GM12878 (cell line): ENCODE measurements at regions of chr6 and their contacts with region 1.

Region 1: DNA sequence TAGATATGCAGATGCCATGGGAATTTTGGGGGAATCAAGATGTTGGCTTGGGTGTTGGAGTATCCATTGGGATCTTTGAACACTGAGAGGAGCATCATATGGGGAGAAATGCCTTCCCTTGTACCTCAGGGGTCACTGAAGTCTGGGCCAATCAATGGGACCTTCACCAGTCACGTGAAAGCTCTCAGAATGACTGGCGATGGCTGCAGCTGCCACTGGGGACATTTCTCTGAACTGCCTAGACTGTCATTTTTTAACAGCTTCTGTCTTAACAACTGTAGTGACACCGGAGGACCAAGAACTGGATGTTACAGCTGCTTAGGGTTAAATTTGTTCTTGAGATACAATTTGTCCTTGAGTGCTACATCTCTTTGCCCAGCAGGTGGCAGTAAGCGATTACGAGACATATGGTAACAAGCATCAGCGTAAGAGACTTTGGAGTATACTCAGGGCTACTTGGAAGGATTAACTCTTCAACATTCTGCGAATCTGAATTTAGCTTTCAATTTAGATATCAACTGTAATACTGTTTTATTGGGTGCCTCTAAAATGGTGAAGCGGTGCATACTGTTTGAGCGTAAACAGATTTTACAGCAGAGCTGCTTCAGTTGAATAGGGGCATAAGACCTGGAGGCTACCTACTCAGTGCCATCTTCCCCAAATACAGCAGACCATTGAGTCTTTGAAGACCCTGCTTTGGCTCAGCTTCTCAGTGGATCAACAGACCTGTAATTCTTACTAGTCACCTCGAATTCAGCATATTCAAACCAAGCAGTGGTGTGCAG is 36.0 kb downstream of the CCN2 start:
- DNase-seq: peak; percentile 24
- ATAC-seq: peak; percentile 84
- H3K4me3 ChIP-seq: no peak overlapping the region
- H3K27ac ChIP-seq: no peak overlapping the region
- H3K4me1 ChIP-seq: no peaks in the 10 kb centered on the region
- H3K27me3 ChIP-seq: peaks cover 0 to 3% of the 10 kb centered on the region in 2 experiments; a peak in 1 of 4 replicates
- CTCF ChIP-seq: peak; percentile 64 to 78 (median 71)
- EP300 ChIP-seq: no peak
- POLR2A ChIP-seq: no peak
- RAD21 ChIP-seq: peak; percentile 75

Region 2: DNA sequence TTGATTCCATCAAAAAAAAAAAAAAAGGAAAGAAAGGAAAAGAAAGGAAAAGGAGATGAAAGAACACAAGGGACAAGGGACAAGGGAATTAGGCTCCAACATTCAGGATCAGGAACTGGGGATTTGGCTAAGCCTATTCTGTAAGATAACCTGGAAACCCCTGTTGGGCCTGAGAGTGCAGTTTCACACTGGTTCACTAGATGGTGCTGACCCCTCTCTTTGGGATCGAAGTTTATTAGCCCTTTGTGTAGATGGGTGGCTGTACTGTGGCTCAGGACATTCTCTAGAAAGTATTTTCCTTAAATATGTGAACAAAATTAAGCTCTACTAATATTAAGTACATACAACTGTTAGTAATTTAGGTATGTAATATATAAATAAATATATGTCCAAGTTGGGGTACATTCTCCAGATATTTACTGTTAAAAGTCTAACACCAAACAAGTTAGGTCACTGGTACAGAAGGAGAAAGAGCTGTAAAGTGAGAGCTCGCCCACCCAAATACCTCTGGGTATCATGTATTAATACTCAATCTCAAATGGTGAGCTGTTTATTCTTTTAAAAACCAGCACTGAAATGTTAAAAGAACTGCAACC is 220.2 kb before region 1 on chr6:
- CTCF ChIA-PET with region 1: interaction called, 41 read pairs
- POLR2A ChIA-PET with region 1: no interaction called
- RAD21 ChIA-PET with region 1: interaction called, 14 read pairs
- SMC1A ChIA-PET with region 1: interaction called, 7 read pairs
- in situ Hi-C with region 1: loop called (anchors 10 kb)
- intact Hi-C with region 1: loop called (anchors 1 kb)
- DNase-seq: no peak
- ATAC-seq: peak; percentile 95
- H3K4me3 ChIP-seq: no peak overlapping the region
- H3K27ac ChIP-seq: no peak overlapping the region
- H3K4me1 ChIP-seq: no peaks in the 10 kb centered on the region
- H3K27me3 ChIP-seq: no peaks in the 10 kb centered on the region
- CTCF ChIP-seq: peak; percentile 61 to 77 (median 72)
- EP300 ChIP-seq: no peak
- POLR2A ChIP-seq: no peak
- RAD21 ChIP-seq: peak; percentile 79

Region 3: GRCh38 chr6:132161283-132161682 is 246.1 kb after region 1 on chr6:
- CTCF ChIA-PET with region 1: no interaction called
- POLR2A ChIA-PET with region 1: no interaction called
- RAD21 ChIA-PET with region 1: no interaction called
- SMC1A ChIA-PET with region 1: no interaction called
- in situ Hi-C with region 1: no loop called
- intact Hi-C with region 1: loop called (anchors 5 kb)
- DNase-seq: no peak
- ATAC-seq: peak; percentile 42; the same call in 1 of the 3 replicates
- H3K4me3 ChIP-seq: no peak overlapping the region
- H3K27ac ChIP-seq: no peak overlapping the region
- H3K4me1 ChIP-seq: no peaks in the 10 kb centered on the region
- H3K27me3 ChIP-seq: no peaks in the 10 kb centered on the region
- CTCF ChIP-seq: peak; percentile 16 to 26 (median 25); a peak in 2 of 6 replicates
- EP300 ChIP-seq: no peak
- POLR2A ChIP-seq: no peak
- RAD21 ChIP-seq: peak; percentile 52

Region 4: GRCh38 chr6:132218059-132218696 is 303.0 kb after region 1 on chr6:
- CTCF ChIA-PET with region 1: interaction called, 34 read pairs
- POLR2A ChIA-PET with region 1: no interaction called
- RAD21 ChIA-PET with region 1: interaction called, 11 read pairs
- SMC1A ChIA-PET with region 1: interaction called, 14 read pairs
- in situ Hi-C with region 1: loop called (anchors 5 kb)
- intact Hi-C with region 1: loop called (anchors 2 kb)
- DNase-seq: no peak
- ATAC-seq: peak; percentile 46; the same call in 1 of the 3 replicates
- H3K4me3 ChIP-seq: no peak overlapping the region
- H3K27ac ChIP-seq: no peak overlapping the region
- H3K4me1 ChIP-seq: no peaks in the 10 kb centered on the region
- H3K27me3 ChIP-seq: no peaks in the 10 kb centered on the region
- CTCF ChIP-seq: peak; percentile 12 to 33 (median 20); a peak in 4 of 6 replicates
- EP300 ChIP-seq: no peak
- POLR2A ChIP-seq: no peak
- RAD21 ChIP-seq: peak; percentile 52